ENCODE measurements at regions of chr19 and their contacts with region 1.

Region 1: GRCh38 chr19:35822579-35822978 is 9.9 kb upstream of the PRODH2 start:
- DNase-seq: no peak
- H3K4me3 ChIP-seq: no peak overlapping the region
- H3K4me3 Mint-ChIP-seq: no peak overlapping the region
- H3K27ac Mint-ChIP-seq: no peak overlapping the region
- H3K4me1 ChIP-seq: peaks cover 4% of the 10 kb centered on the region; the same call in 1 of the 2 replicates
- H3K4me1 Mint-ChIP-seq: no peaks in the 10 kb centered on the region
- H3K27me3 ChIP-seq: no peaks in the 10 kb centered on the region
- H3K27me3 Mint-ChIP-seq: peaks cover 11% of the 10 kb centered on the region
- CTCF ChIP-seq: no peak

Region 2: DNA sequence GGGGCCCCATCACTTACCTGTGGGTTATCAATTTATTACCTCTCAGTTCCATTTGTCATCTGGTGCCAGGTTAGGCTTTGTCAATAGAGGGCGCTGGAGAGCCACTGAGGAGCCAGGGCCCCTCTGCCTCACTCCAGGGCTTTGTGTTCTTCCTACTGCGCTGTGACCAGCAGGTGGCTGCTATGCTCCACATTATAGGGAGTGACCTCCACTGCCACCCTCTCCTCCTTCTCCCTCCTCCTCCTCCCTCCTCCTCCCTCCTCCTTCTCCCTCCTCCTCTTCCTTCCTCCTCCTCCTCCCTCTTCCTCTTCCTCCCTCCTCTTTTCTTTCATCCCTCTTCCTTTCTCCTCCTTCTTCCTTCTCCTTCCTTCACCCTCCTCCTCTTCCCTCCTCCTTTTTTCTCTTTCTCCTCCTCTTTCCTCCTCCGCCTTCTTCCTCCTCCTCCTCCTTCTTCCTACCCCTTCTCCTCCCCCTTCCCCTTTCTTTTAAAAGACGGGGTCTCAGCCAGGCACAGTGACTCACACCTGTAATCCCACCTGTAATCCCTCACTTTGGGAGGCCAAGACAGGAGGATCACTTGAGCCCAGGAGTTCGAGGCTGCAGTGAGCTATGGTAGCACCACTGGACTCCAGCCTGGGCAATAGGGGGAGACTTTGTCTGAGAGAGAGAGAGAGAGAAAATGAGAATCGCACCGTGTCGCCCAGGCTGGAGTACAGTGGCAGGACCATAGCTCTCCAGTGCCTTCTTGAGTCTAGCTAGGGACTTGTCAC is 128.6 kb before region 1 on chr19:
- CTCF ChIA-PET with region 1: interaction called, 8 read pairs
- POLR2A ChIA-PET with region 1: no interaction called
- intact Hi-C with region 1: loop called (anchors 1 kb)
- DNase-seq: peak; percentile 90 to 93
- H3K4me3 ChIP-seq: no peak overlapping the region
- H3K4me3 Mint-ChIP-seq: no peak overlapping the region
- H3K27ac Mint-ChIP-seq: no peak overlapping the region
- H3K4me1 ChIP-seq: no peaks in the 10 kb centered on the region
- H3K4me1 Mint-ChIP-seq: peaks cover 6% of the 10 kb centered on the region
- H3K27me3 ChIP-seq: no peaks in the 10 kb centered on the region
- H3K27me3 Mint-ChIP-seq: no peaks in the 10 kb centered on the region
- CTCF ChIP-seq: peak; percentile 98 to 99

Region 3: GRCh38 chr19:35748106-35749020 is 74.2 kb before region 1 on chr19 and contains the start of gene LIN37:
- CTCF ChIA-PET with region 1: interaction called, 14 read pairs
- POLR2A ChIA-PET with region 1: interaction called, 19 read pairs
- intact Hi-C with region 1: loop called (anchors 2 kb)
- DNase-seq: peak; percentile 99
- H3K4me3 ChIP-seq: peak within 1 kb of the TSS; percentile 58
- H3K4me3 Mint-ChIP-seq: peak within 1 kb of the TSS; percentile 89
- H3K27ac Mint-ChIP-seq: peak within 1 kb of the TSS; percentile 71
- H3K4me1 ChIP-seq: peaks cover 7% of the 10 kb centered on the region
- H3K4me1 Mint-ChIP-seq: peaks cover 18% of the 10 kb centered on the region
- H3K27me3 ChIP-seq: no peaks in the 10 kb centered on the region
- H3K27me3 Mint-ChIP-seq: no peaks in the 10 kb centered on the region
- CTCF ChIP-seq: no peak
- total RNA-seq, gene LIN37: 8.1 and 10.2 TPM in 2 replicates